ENCODE measurements at regions of chr9 and their contacts with region 1.

Region 1: GRCh38 chr9:107749787-107750444 is 260.3 kb upstream of the KLF4 start:
- DNase-seq: peak; percentile 90 to 97
- ATAC-seq: peak; percentile 84
- H3K4me3 ChIP-seq: peak overlapping the region in 1 of 4 donors; percentile 19
- H3K27ac ChIP-seq: peak overlapping the region; percentile 87 to 91 (median 88)
- H3K4me1 ChIP-seq: peaks cover 23 to 36% of the 10 kb centered on the region in 2 donors
- H3K27me3 ChIP-seq: no peaks in the 10 kb centered on the region
- CTCF ChIP-seq: no peak
- POLR2A ChIP-seq: peak; percentile 6 to 27

Region 2: GRCh38 chr9:107637421-107638420 is 112.2 kb before region 1 on chr9:
- in situ Hi-C with region 1: no loop called
- intact Hi-C with region 1: loop called (anchors 1 kb)
- DNase-seq: peak; percentile 87 to 93
- ATAC-seq: peak; percentile 89 to 91
- H3K4me3 ChIP-seq: peak overlapping the region; percentile 56 to 65 (median 56)
- H3K27ac ChIP-seq: peak overlapping the region; percentile 94 to 97 (median 96)
- H3K4me1 ChIP-seq: peaks cover 18 to 19% of the 10 kb centered on the region in 2 donors
- H3K27me3 ChIP-seq: no peaks in the 10 kb centered on the region
- CTCF ChIP-seq: peak; percentile 22 to 44 (median 27)
- POLR2A ChIP-seq: peak; percentile 98 to 99

Region 3: DNA sequence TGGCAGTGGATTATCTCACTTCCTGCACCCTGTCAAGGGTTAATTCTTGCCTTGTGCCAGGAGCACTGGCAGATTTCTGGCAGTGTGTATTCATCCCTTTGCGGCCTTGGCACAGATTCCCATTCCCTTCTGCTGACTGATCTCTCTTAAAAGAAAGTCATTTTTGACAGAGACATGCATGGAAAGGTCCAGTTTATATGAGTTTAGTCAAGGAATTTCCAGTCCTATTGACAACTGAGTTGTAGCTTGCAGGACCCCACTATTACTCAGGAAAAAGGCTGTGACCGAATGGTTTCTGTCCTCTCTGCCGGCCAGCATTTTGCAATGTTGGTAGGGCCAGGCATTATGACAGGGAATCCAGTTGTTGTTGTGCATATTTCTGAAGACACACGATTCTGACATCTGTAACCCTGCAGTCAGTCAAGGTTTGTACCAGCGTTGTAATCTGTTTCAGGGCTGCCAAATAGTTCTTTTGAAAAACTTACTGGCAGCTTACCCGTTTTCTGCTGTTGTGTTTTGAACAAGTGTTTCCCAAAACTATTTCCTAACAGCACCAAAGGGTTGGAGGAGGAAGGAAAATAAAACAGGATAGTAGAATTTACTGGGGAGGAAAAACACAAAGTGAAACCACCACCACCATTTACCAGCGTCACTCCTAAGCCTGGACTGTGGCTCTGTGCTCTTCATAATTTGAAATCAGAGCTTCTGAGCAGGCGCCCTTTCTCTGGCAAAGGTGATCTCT is 17.0 kb before region 1 on chr9:
- in situ Hi-C with region 1: no loop called
- intact Hi-C with region 1: loop called (anchors 1 kb)
- DNase-seq: peak; percentile 54 to 75
- ATAC-seq: peak; percentile 79 to 82
- H3K4me3 ChIP-seq: peak overlapping the region; percentile 32 to 42 (median 36)
- H3K27ac ChIP-seq: peak overlapping the region; percentile 78 to 88 (median 86)
- H3K4me1 ChIP-seq: peaks cover 17 to 19% of the 10 kb centered on the region in 2 donors
- H3K27me3 ChIP-seq: no peaks in the 10 kb centered on the region
- CTCF ChIP-seq: no peak
- POLR2A ChIP-seq: no peak

Region 4: GRCh38 chr9:108053555-108054061 is 303.7 kb after region 1 on chr9:
- in situ Hi-C with region 1: no loop called
- intact Hi-C with region 1: loop called (anchors 5 kb)
- DNase-seq: peak; percentile 68 to 73
- ATAC-seq: peak; percentile 72 to 84
- H3K4me3 ChIP-seq: peak overlapping the region; percentile 7 to 48 (median 22)
- H3K27ac ChIP-seq: peak overlapping the region; percentile 43 to 74 (median 63)
- H3K4me1 ChIP-seq: peaks cover 38 to 41% of the 10 kb centered on the region in 2 donors
- H3K27me3 ChIP-seq: no peaks in the 10 kb centered on the region
- CTCF ChIP-seq: no peak
- POLR2A ChIP-seq: no peak

Measured in gastrocnemius medialis (tissue), 4 donors.